A673 (cell line): ENCODE measurements at regions of chr13 and their contacts with region 1.

Region 1: GRCh38 chr13:90867336-90867683 is 480.2 kb upstream of the MIR17HG start:
- DNase-seq: peak; percentile 82
- H3K4me3 ChIP-seq: no peak overlapping the region
- H3K27ac ChIP-seq: no peak overlapping the region
- H3K4me1 ChIP-seq: no peaks in the 10 kb centered on the region
- H3K27me3 ChIP-seq: no peaks in the 10 kb centered on the region
- CTCF ChIP-seq: peak; percentile 83

Region 2: DNA sequence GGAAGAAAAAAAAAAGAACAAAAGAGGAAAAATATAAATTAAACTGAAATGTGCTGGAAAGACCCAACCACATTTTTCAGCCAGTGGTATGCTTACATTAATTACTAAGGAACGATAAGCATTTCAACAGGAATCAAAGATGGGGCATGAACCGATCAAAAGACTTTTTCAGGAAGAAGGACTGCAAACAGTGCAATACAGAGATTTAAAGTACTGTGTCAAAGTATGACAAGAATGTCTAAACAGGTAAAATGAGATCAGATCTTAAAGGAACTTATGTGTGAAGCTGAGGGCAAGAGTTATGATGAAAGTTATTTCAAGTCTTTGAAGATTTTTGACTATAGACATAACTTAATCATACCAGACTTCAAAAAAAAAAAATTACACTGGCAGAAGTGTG is 1434.3 kb before region 1 on chr13:
- CTCF ChIA-PET with region 1: interaction called, 20 read pairs
- POLR2A ChIA-PET with region 1: no interaction called
- intact Hi-C with region 1: no loop called
- DNase-seq: no peak
- H3K4me3 ChIP-seq: no peak overlapping the region
- H3K27ac ChIP-seq: no peak overlapping the region
- H3K4me1 ChIP-seq: no peaks in the 10 kb centered on the region
- H3K27me3 ChIP-seq: no peaks in the 10 kb centered on the region
- CTCF ChIP-seq: no peak

Region 3: DNA sequence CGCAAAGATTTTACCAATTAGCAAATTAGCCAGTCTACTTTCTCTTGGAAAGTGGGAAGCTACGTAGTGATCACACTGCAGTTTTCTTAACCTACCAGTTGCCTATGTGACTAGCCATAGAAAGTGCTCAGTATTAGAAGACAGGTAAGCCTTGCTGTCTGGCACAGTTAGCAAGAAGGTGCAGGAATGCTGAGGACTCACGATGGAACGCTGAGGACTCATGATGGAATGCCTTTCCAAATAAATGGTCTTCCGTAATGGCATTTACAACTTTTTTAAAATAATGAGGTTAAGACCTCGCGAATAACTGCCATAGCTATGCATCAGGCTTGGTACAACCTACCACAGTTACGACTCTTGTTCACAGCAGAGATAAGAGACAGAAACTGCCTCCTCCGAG is 1165.4 kb before region 1 on chr13:
- CTCF ChIA-PET with region 1: no interaction called
- POLR2A ChIA-PET with region 1: no interaction called
- intact Hi-C with region 1: loop called (anchors 5 kb)
- DNase-seq: no peak
- H3K4me3 ChIP-seq: no peak overlapping the region
- H3K27ac ChIP-seq: no peak overlapping the region
- H3K4me1 ChIP-seq: no peaks in the 10 kb centered on the region
- H3K27me3 ChIP-seq: no peaks in the 10 kb centered on the region
- CTCF ChIP-seq: no peak

Region 4: DNA sequence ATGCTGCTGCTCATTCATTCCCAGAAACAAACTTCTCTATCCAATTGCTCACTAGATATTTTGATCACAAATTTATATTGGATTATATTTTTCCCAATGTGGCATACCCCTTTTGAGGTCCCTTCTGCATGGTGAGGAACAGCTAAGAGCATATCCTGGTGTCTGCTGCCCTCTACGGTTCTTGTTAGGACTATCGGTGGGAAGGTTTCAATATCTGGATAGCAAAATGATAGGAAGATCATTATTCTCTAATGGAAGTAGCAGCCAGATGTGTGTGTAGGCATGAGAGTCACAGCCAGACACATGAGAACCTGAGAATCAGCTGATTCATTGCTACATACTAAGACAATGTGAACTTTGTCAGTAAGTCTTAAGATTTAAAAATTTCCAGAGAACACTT is 942.2 kb before region 1 on chr13:
- CTCF ChIA-PET with region 1: no interaction called
- POLR2A ChIA-PET with region 1: no interaction called
- intact Hi-C with region 1: loop called (anchors 5 kb)
- DNase-seq: peak; percentile 55
- H3K4me3 ChIP-seq: no peak overlapping the region
- H3K27ac ChIP-seq: no peak overlapping the region
- H3K4me1 ChIP-seq: no peaks in the 10 kb centered on the region
- H3K27me3 ChIP-seq: no peaks in the 10 kb centered on the region
- CTCF ChIP-seq: peak; percentile 68

Region 5: GRCh38 chr13:91017031-91017668 is 149.8 kb after region 1 on chr13:
- CTCF ChIA-PET with region 1: interaction called, 4 read pairs
- POLR2A ChIA-PET with region 1: no interaction called
- intact Hi-C with region 1: loop called (anchors 1 kb)
- DNase-seq: peak; percentile 75
- H3K4me3 ChIP-seq: no peak overlapping the region
- H3K27ac ChIP-seq: no peak overlapping the region
- H3K4me1 ChIP-seq: no peaks in the 10 kb centered on the region
- H3K27me3 ChIP-seq: no peaks in the 10 kb centered on the region
- CTCF ChIP-seq: peak; percentile 81

Region 6: GRCh38 chr13:91313103-91313502 is 445.8 kb after region 1 on chr13:
- CTCF ChIA-PET with region 1: no interaction called
- POLR2A ChIA-PET with region 1: no interaction called
- intact Hi-C with region 1: no loop called
- DNase-seq: peak; percentile 51
- H3K4me3 ChIP-seq: no peak overlapping the region
- H3K27ac ChIP-seq: no peak overlapping the region
- H3K4me1 ChIP-seq: no peaks in the 10 kb centered on the region
- H3K27me3 ChIP-seq: peaks cover 52% of the 10 kb centered on the region
- CTCF ChIP-seq: peak; percentile 55